ENCODE measurements at regions of chr1 and their contacts with region 1.

Region 1: GRCh38 chr1:99645699-99646531 is at the start of gene PALMD:
- DNase-seq: peak; percentile 79
- total RNA-seq, gene PALMD: 67.0 TPM

Region 2: GRCh38 chr1:99441299-99442095 is 204.4 kb before region 1 on chr1:
- intact Hi-C with region 1: loop called (anchors 10 kb)
- DNase-seq: no peak

Region 3: GRCh38 chr1:99533909-99534637 is 111.8 kb before region 1 on chr1:
- intact Hi-C with region 1: loop called (anchors 2 kb)
- DNase-seq: no peak

Region 4: DNA sequence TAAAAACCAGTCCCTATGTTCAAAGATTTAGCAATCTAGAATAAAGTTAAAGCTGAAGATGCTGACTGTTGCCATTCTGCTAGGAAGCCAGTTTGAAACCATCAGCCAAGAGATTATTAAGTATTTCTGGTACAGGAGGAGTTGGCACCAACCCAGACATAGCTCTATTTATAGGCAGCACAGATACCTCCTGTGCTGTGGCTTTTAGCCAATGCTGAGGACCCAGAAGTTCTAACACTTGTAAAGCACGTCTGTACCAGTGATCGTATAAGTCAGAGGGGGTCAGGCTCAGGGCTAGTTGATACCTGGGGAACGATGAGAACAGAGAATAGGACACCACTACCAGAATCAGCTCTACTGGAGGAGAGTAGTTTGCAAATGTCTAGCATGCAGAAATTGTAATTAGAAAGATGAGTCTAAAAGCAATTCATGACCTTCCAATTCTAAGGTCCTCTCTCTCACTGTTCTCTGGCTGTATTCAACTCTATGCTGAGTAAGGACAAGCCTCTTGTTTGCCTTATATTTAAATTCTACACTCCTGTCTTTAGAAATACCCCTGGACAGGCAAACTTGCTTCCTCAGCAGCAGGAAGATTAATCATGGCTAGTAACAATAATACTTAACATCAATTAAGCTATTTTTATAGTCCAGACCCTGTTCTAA is 96.8 kb before region 1 on chr1:
- intact Hi-C with region 1: loop called (anchors 5 kb)
- DNase-seq: no peak

Region 5: DNA sequence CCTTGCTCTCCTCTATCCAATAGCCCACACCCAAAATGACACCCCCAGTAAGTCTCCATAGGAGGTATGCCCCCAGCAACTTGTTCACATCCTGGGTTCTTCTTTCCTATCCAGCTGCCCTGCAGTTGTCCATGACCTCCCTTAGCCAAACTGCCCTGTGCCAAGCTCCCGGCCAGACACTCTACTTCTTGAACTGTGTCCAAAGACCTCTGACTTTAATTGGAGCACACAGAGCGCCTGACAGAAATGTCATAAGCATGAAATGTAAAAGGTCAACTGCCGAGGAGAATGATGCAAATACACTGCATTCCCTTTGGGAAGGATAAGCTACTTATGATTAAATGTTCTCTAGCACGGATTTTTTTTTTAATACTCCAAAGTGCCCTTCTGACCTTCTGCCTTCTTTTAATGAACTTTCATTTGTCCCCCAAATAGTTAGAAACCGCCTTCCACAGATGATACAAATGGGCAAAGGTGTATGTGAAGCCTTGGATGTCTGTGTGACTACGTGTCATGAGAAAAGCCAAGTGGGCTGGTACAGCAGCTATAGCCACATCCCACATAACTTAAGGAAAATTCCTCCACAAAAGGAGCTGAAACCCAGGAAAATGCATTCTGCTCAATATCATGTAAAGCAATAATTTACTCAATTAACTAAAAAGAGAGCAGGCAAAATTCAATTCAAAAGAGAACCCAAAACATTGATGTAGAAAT is 26.7 kb after region 1 on chr1:
- intact Hi-C with region 1: loop called (anchors 2 kb)
- DNase-seq: peak; percentile 81

Region 6: DNA sequence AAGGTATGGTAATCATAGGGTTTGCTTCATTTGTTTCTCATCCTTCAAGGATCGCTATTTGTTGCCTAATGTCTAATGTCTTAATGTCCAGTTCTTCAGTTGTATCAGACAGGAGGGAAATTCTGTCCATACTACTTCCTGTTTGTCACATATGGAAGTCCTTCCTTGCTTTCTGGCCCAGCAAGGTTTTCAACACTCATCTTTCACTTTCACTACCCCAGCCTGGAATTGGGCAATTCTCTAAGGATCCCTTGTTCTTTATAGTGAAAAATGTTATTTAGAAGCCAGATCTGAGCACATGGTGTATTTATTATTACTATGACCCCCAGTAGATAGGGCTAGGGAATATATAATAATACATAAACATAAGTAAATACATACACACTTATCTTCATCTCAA is 273.3 kb after region 1 on chr1:
- intact Hi-C with region 1: no loop called
- DNase-seq: no peak